K562 (cell line): ENCODE measurements at regions of chr6 and their contacts with region 1.

Region 1: GRCh38 chr6:107982486-107982885 is 24.5 kb upstream of the SEC63 start:
- DNase-seq: no peak
- ATAC-seq: no peak; the same call in 2 of the 3 replicates
- H3K4me3 ChIP-seq: no peak overlapping the region
- H3K27ac ChIP-seq: no peak overlapping the region
- H3K4me1 ChIP-seq: peaks cover 3 to 5% of the 10 kb centered on the region in 2 experiments; a peak in 3 of 5 replicates
- H3K27me3 ChIP-seq: no peaks in the 10 kb centered on the region
- CTCF ChIP-seq: no peak
- EP300 ChIP-seq: no peak
- POLR2A ChIP-seq: no peak
- RAD21 ChIP-seq: no peak

Region 2: DNA sequence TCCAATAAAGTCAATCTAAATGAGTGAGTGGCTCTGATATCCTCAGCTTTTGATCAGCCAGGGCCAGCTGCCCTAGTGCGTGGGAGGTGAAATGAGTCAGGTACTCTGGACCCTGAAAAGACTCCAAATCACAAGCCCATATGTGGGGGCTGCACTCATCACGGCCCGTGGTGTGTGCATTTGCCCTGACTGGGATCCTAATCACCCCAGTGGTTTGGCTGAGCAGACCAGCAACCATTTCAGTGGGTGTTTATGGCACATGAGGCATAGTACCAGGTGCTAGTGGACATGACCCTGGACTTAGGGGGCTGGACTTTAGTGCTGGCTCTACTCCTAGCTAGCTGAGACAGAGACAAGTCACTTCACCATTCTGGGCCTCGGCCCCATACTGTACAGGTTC is 197.8 kb before region 1 on chr6:
- CTCF ChIA-PET with region 1: no interaction called
- POLR2A ChIA-PET with region 1: no interaction called
- in situ Hi-C with region 1: no loop called
- intact Hi-C with region 1: no loop called
- DNase-seq: peak in 1 of 4 experiments; percentile 9
- ATAC-seq: no peak; the same call in 2 of the 3 replicates
- H3K4me3 ChIP-seq: no peak overlapping the region
- H3K27ac ChIP-seq: no peak overlapping the region
- H3K4me1 ChIP-seq: no peaks in the 10 kb centered on the region
- H3K27me3 ChIP-seq: peaks cover 40 to 54% of the 10 kb centered on the region in 2 experiments
- CTCF ChIP-seq: no peak
- EP300 ChIP-seq: no peak
- POLR2A ChIP-seq: no peak
- RAD21 ChIP-seq: no peak

Region 3: DNA sequence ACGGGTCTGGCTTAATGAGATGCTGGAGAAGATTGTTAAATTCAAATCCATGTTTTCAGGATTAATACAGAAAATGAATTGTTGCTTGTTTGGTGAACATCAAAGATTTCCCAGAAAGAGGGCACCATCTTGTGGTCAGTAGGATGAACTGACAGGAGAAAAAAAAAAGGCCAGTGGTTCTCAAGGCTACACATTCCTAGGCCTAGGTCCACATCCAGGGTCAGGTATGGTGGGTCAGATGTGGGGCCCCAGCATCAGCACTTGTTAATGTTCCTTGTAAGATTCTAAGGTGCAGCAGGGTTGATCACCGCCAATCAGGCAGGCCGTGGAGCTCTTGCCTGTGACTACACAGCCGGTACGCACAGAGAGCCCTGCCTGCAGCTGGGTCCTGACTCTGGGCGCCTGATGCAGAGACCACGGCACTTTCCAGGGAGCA is 544.3 kb after region 1 on chr6:
- CTCF ChIA-PET with region 1: interaction called, 19 read pairs
- POLR2A ChIA-PET with region 1: no interaction called
- in situ Hi-C with region 1: loop called (anchors 5 kb)
- intact Hi-C with region 1: loop called (anchors 2 kb)
- DNase-seq: peak; percentile 44 to 50 (median 48)
- ATAC-seq: peak; percentile 74
- H3K4me3 ChIP-seq: no peak overlapping the region
- H3K27ac ChIP-seq: no peak overlapping the region
- H3K4me1 ChIP-seq: no peaks in the 10 kb centered on the region
- H3K27me3 ChIP-seq: no peaks in the 10 kb centered on the region
- CTCF ChIP-seq: peak; percentile 59 to 84 (median 80); a peak in 5 of 6 replicates
- EP300 ChIP-seq: no peak
- POLR2A ChIP-seq: no peak
- RAD21 ChIP-seq: peak; percentile 85 to 90